Activated CD4-positive, alpha-beta T cell treated with anti-CD3 and anti-CD28 coated beads, Interleukin-2, amount 10 ng/mL, durations not matched to agents 24 days and 14 days (primary cell): ENCODE measurements at regions of chrX and their contacts with region 1.

Region 1: GRCh38 chrX:79259073-79259689 is 108.0 kb downstream of the ITM2A start:
- DNase-seq: peak; percentile 89
- H3K4me3 Mint-ChIP-seq: peak overlapping the region; percentile 75
- H3K27ac Mint-ChIP-seq: peak overlapping the region; percentile 93
- H3K4me1 Mint-ChIP-seq: peaks cover 52% of the 10 kb centered on the region
- H3K27me3 Mint-ChIP-seq: no peaks in the 10 kb centered on the region

Region 2: GRCh38 chrX:78979789-78980464 is 279.3 kb before region 1 on chrX:
- intact Hi-C with region 1: loop called (anchors 1 kb)
- DNase-seq: peak; percentile 58
- H3K4me3 Mint-ChIP-seq: peak overlapping the region; percentile 79
- H3K27ac Mint-ChIP-seq: peak overlapping the region; percentile 100
- H3K4me1 Mint-ChIP-seq: peaks cover 19% of the 10 kb centered on the region
- H3K27me3 Mint-ChIP-seq: no peaks in the 10 kb centered on the region

Region 3: DNA sequence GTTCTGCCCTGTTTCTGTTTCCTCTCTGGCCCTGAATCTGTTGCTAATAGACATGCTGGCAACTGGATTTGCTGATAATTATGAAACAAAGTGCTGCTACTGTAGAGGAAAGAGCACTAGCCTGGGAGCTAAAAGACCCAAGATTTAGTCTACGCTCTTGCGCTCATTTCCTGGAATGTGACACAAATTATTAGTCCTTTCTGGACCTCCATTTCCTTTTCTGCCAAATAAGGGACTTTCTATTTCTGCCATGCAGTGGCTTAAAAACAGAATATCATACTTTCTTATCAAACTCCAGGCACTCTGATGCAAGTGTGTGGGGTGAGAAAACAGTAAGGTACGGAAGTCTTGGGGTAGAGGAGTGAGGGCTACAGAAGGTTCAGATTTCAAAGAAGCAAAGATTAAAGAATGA is 163.0 kb before region 1 on chrX:
- intact Hi-C with region 1: loop called (anchors 2 kb)
- DNase-seq: no peak
- H3K4me3 Mint-ChIP-seq: peak overlapping the region; percentile 76
- H3K27ac Mint-ChIP-seq: peak overlapping the region; percentile 92
- H3K4me1 Mint-ChIP-seq: peaks cover 39% of the 10 kb centered on the region
- H3K27me3 Mint-ChIP-seq: no peaks in the 10 kb centered on the region

Region 4: GRCh38 chrX:79161655-79162054 is 97.5 kb before region 1 on chrX:
- intact Hi-C with region 1: loop called (anchors 1 kb)
- DNase-seq: peak; percentile 85
- H3K4me3 Mint-ChIP-seq: peak overlapping the region; percentile 82
- H3K27ac Mint-ChIP-seq: peak overlapping the region; percentile 98
- H3K4me1 Mint-ChIP-seq: peaks cover 40% of the 10 kb centered on the region
- H3K27me3 Mint-ChIP-seq: no peaks in the 10 kb centered on the region

Region 5: DNA sequence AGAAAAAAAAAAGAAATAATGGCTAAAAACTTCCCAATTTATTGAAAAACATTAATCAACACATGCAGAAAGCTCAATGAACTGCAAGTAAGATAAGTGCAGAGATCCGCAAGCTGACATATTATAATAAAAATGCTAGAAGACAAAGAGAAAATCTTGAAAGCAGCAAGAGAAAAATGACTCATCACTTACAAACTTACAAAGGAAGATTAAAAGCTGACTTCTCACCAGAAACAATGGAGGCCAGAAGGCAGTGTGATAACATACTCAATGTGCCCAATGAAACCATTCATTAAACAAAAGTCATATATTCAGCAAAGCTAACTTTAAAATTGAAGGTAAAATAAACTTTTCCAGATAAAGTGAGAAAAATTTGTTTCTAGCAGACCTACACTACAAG is 1557.8 kb after region 1 on chrX:
- intact Hi-C with region 1: no loop called
- DNase-seq: no peak
- H3K4me3 Mint-ChIP-seq: no peak overlapping the region
- H3K27ac Mint-ChIP-seq: no peak overlapping the region
- H3K4me1 Mint-ChIP-seq: peaks cover 3% of the 10 kb centered on the region
- H3K27me3 Mint-ChIP-seq: no peaks in the 10 kb centered on the region